ENCODE measurements at regions of chr16 and their contacts with region 1.

Region 1: DNA sequence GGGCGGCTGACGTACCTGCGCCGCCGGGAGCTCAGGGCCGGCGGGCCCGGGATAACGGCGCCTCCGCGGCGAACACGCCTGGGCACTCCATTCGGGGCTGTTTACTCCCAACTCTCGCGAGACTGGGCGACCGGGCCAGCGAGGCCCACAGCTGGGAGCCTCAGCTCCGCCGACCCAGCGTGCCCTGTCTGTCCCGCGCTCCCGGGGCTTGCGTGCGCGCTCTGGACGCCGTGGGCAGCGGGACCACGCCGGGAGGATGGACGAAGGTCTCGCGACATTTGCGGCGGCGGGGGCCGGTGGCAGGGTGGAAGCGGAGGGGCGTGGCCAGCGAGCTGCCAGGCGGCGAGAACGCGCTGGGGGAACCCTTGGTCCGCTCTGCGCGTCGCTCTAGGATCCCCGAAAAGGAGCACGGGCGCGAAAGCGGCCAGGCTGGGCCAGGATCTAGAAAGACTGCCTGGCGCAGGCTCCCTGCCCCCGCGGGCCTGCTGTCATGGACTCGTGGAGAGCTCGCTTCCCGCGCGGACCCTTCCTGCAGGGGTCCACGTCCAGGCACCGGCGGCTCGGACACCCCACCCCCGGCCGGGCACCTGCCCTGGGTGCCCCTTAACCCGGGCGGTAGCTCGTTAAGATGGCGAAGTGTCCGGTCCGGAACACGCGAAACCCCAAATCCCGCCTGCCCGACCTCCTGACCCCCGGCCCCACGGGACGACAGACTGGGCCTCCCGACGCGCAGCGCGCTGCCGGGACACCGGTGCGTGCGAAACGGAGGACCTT is at the start of gene MBTPS1:
- DNase-seq: peak; percentile 99
- H3K4me3 ChIP-seq: peak within 1 kb of the TSS; percentile 83 to 99 (median 86)
- H3K27ac ChIP-seq: peak within 1 kb of the TSS; percentile 90 to 95 (median 94)
- H3K4me1 ChIP-seq: peaks cover 0 to 27% (median 22%) of the 10 kb centered on the region in 4 donors
- H3K27me3 ChIP-seq: no peaks in the 10 kb centered on the region
- CTCF ChIP-seq: no peak
- EP300 ChIP-seq: no peak
- POLR2A ChIP-seq: peak; percentile 72
- total RNA-seq, gene MBTPS1: 69.3 to 83.6 (median 79.3) TPM

Region 2: DNA sequence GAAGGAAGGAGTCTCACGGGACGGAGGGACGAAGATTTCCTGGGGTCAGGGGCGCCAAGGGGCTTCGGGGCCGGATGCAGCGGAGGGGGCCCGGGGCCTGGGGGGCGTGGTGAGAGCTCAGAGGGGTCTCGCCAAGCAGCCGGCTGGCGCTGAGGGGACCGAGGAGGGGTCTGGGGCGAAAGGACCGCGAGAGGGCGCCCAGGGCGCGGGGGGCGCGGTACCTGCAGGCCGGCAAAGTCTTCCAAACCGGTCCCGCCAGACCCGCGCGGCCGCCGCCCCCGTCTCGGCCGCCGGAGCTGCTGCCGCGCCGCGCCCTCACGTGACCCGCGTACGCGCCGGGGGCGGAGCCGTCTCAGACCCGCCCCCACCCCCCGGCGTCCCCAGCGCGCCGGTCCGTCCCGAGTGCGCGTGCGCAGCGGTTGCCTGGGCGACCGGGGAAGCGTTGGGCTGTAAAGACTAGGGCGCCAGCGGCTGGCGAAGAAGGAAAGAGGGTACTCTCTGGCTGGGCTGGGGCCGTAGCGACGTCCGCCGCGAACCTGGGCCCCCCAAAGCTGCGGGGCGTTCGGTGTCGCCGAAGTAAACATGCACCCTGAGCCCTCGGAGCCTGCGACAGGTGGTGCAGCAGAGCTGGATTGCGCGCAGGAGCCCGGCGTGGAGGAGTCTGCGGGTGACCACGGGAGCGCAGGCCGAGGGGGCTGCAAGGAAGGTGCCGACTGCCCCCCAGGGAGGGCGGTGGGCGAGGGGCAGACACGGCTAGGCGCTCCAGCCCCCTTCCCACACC is 28.1 kb after region 1 on chr16 and contains the starts of genes DNAAF1 and HSDL1:
- intact Hi-C with region 1: loop called (anchors 2 kb)
- DNase-seq: peak; percentile 94
- H3K4me3 ChIP-seq: peak within 1 kb of the TSS; percentile 97 to 99 (median 98)
- H3K27ac ChIP-seq: peak within 1 kb of the TSS; percentile 75 to 85 (median 80)
- H3K4me1 ChIP-seq: peaks cover 0 to 29% (median 17%) of the 10 kb centered on the region in 4 donors
- H3K27me3 ChIP-seq: no peaks in the 10 kb centered on the region
- CTCF ChIP-seq: no peak
- EP300 ChIP-seq: no peak
- POLR2A ChIP-seq: no peak
- total RNA-seq, gene DNAAF1: 0.36 TPM in 1 of 4 donors, not detected in the others
- total RNA-seq, gene HSDL1: 11.4 to 27.8 (median 18.4) TPM

Region 3: DNA sequence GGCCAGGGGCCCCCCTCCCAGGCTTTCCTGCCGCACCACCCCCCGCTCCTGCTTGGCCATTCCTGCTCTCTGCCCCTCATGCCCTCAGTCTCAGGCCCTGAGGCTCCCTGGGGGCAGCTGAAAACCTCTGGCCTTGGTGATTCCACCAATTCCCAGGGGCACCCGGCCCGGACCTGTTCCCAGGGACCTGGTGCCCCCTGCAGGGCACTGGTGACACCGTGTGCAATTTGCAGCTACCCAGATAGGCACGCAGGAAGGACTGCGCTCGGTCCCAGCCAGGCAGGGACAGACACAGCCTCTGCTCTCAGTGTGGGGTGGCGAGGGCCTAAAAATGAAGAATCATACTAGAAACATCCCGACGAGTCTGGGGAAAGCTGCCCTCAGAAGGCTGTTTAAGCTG is 191.2 kb after region 1 on chr16:
- intact Hi-C with region 1: loop called (anchors 5 kb)
- DNase-seq: peak; percentile 87
- H3K4me3 ChIP-seq: no peak overlapping the region
- H3K27ac ChIP-seq: peak overlapping the region in 3 of 4 donors; percentile 15 to 94 (median 55)
- H3K4me1 ChIP-seq: peaks cover 0 to 52% (median 43%) of the 10 kb centered on the region in 4 donors
- H3K27me3 ChIP-seq: no peaks in the 10 kb centered on the region
- CTCF ChIP-seq: peak in 3 of 4 experiments; percentile 60 to 76 (median 68)
- EP300 ChIP-seq: no peak
- POLR2A ChIP-seq: no peak

Measured in sigmoid colon (tissue), 7 donors.